ENCODE measurements at regions of chr17 and their contacts with region 1.

Region 1: GRCh38 chr17:30950669-30951399 is 20.0 kb upstream of the RNF135 start:
- DNase-seq: peak; percentile 4

Region 2: GRCh38 chr17:31015639-31016038 is 64.8 kb after region 1 on chr17:
- in situ Hi-C with region 1: no loop called
- DNase-seq: no peak

Region 3: DNA sequence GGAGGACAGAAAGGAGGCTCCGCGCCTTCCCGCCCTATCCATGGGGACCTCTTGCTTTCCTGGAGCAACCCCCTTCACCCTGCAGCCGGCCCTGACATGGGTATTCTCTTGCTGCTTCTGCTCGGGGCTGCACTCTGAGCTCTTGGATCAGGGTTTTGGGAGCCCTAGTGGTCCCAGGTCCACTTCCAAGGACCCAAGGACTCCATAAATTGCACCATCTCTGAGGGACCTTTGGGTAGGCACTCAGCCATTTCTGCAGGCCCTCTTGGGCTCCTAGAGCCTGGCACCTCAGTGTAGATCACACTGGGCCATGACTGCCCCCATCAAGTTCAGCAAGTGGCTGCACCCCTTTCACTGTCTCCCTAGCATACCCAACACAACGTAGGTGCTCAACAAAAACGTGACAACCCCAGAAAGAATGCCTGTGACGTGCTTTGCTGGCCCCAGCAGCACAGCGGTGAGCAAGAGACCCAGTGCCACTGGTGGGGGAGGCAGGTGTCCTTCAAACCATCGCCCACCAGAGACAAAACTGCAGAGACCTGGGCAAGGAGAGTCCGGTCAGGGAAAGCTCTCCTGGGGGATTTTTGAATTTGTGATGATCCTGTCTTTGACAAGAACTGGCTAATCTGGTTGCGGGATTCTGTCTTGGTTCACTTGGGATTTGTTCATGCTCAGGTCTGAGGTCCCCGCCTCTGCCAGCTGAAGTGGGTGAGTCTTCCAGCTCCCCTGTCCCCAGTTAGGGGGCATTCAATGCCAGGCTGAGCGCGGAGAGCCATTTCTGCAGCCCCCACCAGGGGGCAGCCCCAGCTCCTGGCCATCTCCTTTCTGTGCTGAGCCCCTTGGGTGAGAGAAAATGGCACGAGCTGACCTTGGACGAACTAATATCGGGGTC is 438.2 kb after region 1 on chr17:
- in situ Hi-C with region 1: loop called (anchors 10 kb)
- DNase-seq: peak; percentile 56

Measured in G401 (cell line).